ENCODE measurements at regions of chr20 and their contacts with region 1.

Region 1: DNA sequence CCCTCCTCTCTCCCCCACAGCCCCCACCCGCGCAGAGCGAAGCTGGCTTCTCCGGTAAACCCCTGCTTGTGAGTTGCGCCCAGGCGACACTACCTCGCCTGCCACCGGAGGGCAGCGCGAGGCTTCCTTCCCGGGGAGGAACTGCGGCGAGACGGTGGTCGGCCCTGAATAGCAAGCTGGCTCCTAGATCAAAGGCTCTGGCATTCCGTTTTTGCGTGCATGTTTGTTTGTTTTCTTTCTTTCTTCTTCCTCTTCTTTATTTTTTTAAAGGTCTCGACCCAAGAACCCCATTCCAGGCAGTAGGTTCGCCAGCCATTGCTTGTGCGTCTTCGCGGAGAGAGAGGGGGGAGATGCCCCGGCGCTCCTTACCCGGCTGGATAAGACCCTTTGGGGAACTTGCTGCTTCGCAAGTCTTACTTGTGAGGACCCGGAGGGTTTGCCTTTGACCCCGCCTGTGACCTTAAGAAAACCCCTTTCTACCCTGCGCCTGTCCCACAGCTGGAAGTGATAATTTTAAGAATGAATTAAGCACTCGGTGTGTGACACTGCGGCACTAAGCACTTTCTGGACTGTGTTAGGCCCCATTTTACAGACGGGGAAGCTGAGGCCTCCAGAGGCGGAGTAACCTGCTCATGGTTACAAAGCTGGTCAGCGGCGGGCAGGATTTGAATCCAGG is 92.7 kb upstream of the SIRPA start:
- DNase-seq: peak; percentile 71
- H3K4me3 Mint-ChIP-seq: peak overlapping the region; percentile 64
- H3K27ac Mint-ChIP-seq: no peak overlapping the region
- H3K4me1 Mint-ChIP-seq: peaks cover 8% of the 10 kb centered on the region
- H3K27me3 Mint-ChIP-seq: peaks cover 43% of the 10 kb centered on the region

Region 2: DNA sequence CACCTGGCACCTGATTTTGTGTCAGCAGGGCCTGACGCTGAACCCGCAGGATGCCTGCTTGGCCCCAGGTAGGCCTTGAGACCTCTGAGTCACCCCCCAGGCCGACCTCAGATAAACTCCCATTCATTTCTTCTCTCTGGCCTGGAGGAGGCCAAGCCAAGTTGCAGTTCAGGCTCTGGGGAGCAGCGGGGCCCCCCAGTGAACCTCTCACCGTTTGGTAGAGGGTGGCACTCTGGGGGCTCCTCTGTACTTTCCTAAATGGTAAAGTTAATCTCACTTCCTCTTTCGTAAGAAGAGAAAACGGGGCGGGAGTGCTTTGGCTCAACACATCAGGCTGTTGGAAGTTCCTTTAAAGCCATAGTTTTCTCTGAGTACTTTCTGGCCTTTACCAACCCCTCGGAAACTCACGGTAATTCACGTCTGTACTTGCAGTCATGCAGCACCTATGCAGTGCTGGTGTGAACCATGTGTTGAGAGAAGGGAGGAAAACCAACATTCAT is 95.5 kb after region 1 on chr20:
- CTCF ChIA-PET with region 1: interaction called, 3 read pairs
- intact Hi-C with region 1: loop called (anchors 2 kb)
- DNase-seq: no peak
- H3K4me3 Mint-ChIP-seq: no peak overlapping the region
- H3K27ac Mint-ChIP-seq: no peak overlapping the region
- H3K4me1 Mint-ChIP-seq: no peaks in the 10 kb centered on the region
- H3K27me3 Mint-ChIP-seq: peaks cover 33% of the 10 kb centered on the region

Region 3: DNA sequence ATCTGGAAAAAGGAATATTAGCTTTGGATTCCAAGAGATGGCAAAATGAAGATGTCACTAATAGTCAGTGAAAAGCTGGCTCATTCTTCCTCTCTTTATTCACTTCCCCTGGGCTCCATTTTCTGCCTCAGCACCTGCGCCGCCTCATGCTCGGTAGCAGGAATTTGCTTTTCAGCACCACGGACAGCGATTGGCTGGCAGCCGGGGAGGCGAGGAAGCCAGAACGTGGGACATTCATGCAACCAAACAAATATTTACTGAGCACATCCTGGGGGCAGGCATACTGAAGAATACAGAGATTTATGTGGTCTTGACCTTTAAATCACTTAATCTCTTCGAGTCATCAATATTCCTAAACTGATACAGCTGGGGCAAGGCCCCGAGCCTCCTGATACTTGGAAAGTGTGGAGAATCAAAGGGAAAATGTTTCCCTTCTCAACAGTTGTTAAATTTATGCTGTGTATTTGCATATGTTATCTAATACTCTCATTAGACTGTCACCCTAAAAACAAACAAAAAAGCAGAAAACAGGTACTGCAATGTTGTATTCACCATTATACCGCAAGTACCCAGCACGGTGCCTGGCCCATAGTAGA is 203.4 kb after region 1 on chr20:
- CTCF ChIA-PET with region 1: interaction called, 3 read pairs
- intact Hi-C with region 1: loop called (anchors 1 kb)
- DNase-seq: peak; percentile 84
- H3K4me3 Mint-ChIP-seq: no peak overlapping the region
- H3K27ac Mint-ChIP-seq: no peak overlapping the region
- H3K4me1 Mint-ChIP-seq: no peaks in the 10 kb centered on the region
- H3K27me3 Mint-ChIP-seq: peaks cover 25% of the 10 kb centered on the region

Region 4: DNA sequence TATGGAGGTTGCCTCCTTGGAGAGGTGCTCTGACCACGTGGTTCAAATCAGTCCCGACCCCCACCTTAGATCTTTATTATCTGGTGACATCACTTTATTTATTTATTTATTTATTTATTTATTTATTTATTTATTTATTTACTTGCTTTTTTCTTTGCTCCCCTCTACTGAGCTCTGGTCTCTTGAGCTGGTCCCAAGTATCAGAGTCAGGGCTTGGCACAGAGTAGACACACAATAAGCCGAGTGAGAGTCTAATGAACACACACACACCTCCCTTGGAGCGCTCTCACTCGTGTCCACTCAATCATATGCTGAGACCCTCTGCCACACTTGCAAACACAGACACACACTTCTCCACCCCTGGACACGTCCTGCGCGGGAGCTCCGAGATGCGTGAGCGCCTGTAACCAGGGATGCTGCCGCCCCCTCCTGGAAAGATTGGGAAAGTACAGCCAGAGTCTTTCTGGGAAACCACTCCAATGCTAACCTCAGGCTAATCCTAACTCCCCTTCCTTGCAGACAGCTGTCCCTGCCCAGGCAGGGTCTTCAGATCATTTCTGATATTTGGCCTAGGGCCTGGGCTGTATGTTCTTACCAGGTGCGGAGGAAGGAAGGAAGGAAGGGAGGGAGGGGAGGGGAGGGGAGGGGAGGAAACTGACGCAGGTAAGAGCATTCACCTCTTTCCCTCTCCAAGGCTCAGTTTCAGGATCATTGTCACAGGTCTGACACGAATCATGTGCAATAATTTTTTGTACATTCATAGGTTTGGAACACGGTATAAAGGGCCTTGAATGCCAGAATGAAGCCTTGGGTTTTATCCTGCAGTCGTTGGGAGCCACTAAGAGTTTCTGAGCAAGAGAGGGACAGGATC is 370.0 kb after region 1 on chr20:
- CTCF ChIA-PET with region 1: no interaction called
- intact Hi-C with region 1: loop called (anchors 1 kb)
- DNase-seq: peak; percentile 84
- H3K4me3 Mint-ChIP-seq: no peak overlapping the region
- H3K27ac Mint-ChIP-seq: no peak overlapping the region
- H3K4me1 Mint-ChIP-seq: peaks cover 3% of the 10 kb centered on the region
- H3K27me3 Mint-ChIP-seq: peaks cover 3% of the 10 kb centered on the region

Measured in activated naive CD4-positive, alpha-beta T cell treated with anti-CD3 and anti-CD28 coated beads for 36 hours (primary cell).